ENCODE measurements at regions of chr22 and their contacts with region 1.

Region 1: DNA sequence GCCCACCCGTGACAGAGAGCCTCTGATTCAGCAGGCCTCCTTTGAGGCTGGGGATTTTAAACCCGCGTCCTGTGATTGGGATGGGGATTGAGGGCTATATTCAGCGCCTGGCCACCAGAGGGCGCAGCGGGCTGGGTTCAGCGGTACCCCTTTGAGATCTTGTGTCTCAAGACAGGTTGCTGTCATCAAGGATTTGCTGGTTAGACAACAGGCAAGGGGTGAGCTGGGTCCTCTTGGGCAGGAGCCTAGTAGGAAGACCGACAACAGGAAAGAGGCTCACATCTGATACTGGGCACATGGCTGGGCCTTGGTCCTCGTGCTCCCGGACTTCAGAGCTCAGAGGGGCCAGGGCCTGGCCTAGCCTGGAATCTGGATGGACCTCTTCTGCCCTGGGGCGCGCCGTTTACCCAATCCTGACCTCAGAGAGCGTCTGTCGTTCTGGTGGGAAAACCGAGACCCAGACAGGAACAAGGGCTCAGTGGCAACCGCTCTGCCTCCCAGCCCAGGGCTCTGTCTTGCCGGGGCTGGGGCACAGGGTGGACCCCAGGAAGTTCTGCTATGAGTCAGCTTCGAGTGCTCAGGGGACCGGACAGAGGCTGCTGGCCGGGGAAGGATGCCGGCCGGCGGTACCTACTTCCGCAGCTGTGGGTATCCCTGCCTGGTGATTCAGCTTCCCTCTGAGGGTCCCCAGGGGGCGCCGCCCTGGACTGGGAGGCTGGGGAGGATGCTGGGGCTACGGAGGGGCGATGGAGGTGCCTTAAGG is 929 bp upstream of the SLC35E4 start:
- DNase-seq: peak; percentile 81 to 90 (median 85)
- H3K4me3 ChIP-seq: peak overlapping the region; percentile 72
- H3K4me3 Mint-ChIP-seq: peak overlapping the region; percentile 79 to 96 (median 84)
- H3K27ac ChIP-seq: peak overlapping the region; percentile 69
- H3K27ac Mint-ChIP-seq: peak overlapping the region; percentile 90 to 98 (median 94)
- H3K4me1 ChIP-seq: peaks cover 35% of the 10 kb centered on the region
- H3K4me1 Mint-ChIP-seq: peaks cover 18 to 30% (median 21%) of the 10 kb centered on the region in 3 donors
- H3K27me3 ChIP-seq: no peaks in the 10 kb centered on the region
- H3K27me3 Mint-ChIP-seq: no peaks in the 10 kb centered on the region

Region 2: GRCh38 chr22:30444632-30445437 is 189.8 kb before region 1 on chr22:
- CTCF ChIA-PET with region 1: no interaction called
- POLR2A ChIA-PET with region 1: no interaction called
- DNase-seq: peak in 3 of 5 donors; percentile 24 to 59 (median 39)
- H3K4me3 ChIP-seq: no peak overlapping the region
- H3K4me3 Mint-ChIP-seq: peak overlapping the region in 1 of 7 donors; percentile 39
- H3K27ac ChIP-seq: no peak overlapping the region
- H3K27ac Mint-ChIP-seq: peak overlapping the region in 4 of 8 donors; percentile 26 to 55 (median 42)
- H3K4me1 ChIP-seq: peaks cover 11% of the 10 kb centered on the region
- H3K4me1 Mint-ChIP-seq: peaks cover 14 to 30% (median 20%) of the 10 kb centered on the region in 3 donors
- H3K27me3 ChIP-seq: no peaks in the 10 kb centered on the region
- H3K27me3 Mint-ChIP-seq: peaks cover 49 to 83% of the 10 kb centered on the region in 2 donors

Region 3: DNA sequence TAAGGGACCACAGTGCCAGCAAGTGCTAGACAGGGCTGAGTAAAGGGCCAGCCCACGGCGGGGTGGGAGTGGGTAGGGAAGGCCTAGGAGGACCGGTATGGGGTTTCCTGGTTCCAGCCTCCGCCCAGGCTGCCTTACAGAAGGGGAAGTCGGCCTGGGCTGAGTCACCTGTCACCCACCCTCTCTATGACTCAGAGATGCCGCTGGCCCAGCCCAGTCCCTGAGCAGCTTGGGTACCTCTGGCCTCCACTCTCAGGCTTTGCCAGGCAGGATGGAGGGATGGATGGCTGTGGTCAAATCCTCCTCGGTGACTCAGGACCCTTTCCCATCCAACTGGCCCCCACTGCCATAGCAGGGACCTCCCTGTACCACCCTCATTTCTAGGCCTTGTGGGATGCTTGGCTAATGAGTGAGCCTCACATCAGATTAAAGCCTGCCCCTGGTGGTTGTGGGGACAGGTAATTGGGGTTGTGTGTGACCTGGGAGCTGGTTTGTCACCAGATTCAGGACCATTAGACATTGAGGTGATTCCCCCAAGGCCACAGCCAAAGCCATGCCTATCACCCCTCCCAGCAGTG is 14.9 kb after region 1 on chr22:
- CTCF ChIA-PET with region 1: interaction called, 35 read pairs
- POLR2A ChIA-PET with region 1: no interaction called
- DNase-seq: peak in 4 of 5 donors; percentile 14 to 83 (median 34)
- H3K4me3 ChIP-seq: no peak overlapping the region
- H3K4me3 Mint-ChIP-seq: no peak overlapping the region
- H3K27ac ChIP-seq: peak overlapping the region; percentile 18
- H3K27ac Mint-ChIP-seq: peak overlapping the region; percentile 21 to 92 (median 70)
- H3K4me1 ChIP-seq: no peaks in the 10 kb centered on the region
- H3K4me1 Mint-ChIP-seq: peaks cover 4 to 22% (median 10%) of the 10 kb centered on the region in 3 donors
- H3K27me3 ChIP-seq: no peaks in the 10 kb centered on the region
- H3K27me3 Mint-ChIP-seq: no peaks in the 10 kb centered on the region

Region 4: DNA sequence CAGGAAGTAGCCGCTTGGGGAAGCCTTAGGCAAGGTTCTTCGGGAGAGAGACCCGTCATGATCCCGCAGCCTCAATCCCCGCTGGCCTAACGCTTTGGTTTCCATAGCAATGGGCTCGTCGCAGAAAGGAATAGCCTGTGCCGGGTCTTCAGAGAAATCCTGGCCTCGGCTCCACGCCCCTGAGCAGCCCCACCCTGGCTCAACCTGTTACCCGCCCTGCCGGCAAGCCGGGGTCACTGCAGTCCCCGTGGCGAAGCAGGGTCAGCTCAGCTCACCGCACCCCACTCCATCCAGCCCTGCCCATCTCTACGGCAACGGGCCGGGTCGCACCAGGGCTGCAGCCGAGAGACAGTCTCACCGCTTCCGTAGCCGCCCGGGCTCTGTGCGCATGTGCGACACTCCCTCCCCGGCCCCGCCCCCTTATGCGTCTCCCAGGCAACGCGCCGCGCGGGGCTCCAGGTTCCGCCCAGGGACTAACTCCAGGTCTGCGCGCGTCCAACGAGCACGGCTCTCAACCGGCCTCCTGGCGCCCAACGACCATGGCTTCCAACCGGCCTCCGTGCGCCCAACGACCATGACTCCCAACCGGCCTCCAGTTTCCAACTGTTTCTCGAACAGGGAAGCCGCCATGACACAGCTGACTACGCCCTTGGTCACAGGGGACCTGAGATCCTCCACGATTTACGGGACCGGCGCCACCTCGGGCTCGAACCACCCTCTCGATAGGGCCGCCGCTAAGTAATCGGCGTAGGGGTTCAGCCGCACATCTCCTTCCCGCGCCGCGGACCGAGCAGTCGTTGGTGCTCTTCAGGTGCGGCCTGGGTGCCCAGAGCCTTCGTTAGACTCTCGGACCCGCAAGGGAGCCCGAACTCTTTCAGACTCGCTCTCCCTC is 33.1 kb after region 1 on chr22 and contains the start of gene DUSP18:
- CTCF ChIA-PET with region 1: interaction called, 14 read pairs
- POLR2A ChIA-PET with region 1: interaction called, 4 read pairs
- DNase-seq: peak; percentile 90 to 96 (median 93)
- H3K4me3 ChIP-seq: peak within 1 kb of the TSS; percentile 96
- H3K4me3 Mint-ChIP-seq: peak within 1 kb of the TSS; percentile 89 to 98 (median 95)
- H3K27ac ChIP-seq: peak within 1 kb of the TSS; percentile 84
- H3K27ac Mint-ChIP-seq: peak within 1 kb of the TSS; percentile 88 to 97 (median 94)
- H3K4me1 ChIP-seq: peaks cover 20% of the 10 kb centered on the region
- H3K4me1 Mint-ChIP-seq: peaks cover 23 to 42% (median 38%) of the 10 kb centered on the region in 3 donors
- H3K27me3 ChIP-seq: no peaks in the 10 kb centered on the region
- H3K27me3 Mint-ChIP-seq: no peaks in the 10 kb centered on the region
- total RNA-seq, gene DUSP18: 11.4 to 12.5 TPM

Region 5: DNA sequence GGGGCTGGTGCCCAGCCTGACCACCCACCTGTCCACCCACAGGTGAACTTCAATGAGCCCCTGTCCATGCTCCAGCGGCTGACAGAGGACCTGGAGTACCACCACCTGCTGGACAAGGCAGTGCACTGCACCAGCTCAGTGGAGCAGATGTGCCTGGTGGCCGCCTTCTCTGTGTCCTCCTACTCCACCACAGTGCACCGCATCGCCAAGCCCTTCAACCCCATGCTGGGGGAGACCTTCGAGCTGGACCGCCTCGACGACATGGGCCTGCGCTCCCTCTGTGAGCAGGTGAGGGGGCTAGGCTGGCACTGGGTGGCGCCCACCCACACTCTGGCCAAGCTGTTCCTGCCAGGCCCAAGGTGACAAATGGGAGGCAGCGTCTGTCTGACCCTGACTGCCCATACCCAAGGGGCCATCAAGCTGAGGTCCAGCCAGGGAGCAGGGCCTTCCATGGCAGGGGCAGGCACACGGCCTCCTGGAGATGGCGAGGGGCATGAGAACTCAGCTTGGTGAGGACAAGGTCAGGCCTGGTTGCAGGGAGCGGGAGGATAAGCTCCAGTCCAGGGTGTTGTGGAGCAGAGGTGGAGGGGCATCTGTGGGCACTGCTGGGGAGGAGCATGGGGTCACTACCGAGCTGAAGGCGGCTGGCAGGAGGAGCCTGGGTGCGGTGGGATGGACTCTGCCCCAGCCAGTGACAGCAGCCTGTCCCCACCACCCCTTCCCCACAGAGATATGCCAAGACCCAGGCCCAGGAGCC is 256.2 kb after region 1 on chr22:
- CTCF ChIA-PET with region 1: interaction called, 15 read pairs
- POLR2A ChIA-PET with region 1: no interaction called
- DNase-seq: no peak
- H3K4me3 ChIP-seq: no peak overlapping the region
- H3K4me3 Mint-ChIP-seq: no peak overlapping the region
- H3K27ac ChIP-seq: no peak overlapping the region
- H3K27ac Mint-ChIP-seq: no peak overlapping the region
- H3K4me1 ChIP-seq: peaks cover 17% of the 10 kb centered on the region
- H3K4me1 Mint-ChIP-seq: peaks cover 15 to 26% (median 21%) of the 10 kb centered on the region in 3 donors
- H3K27me3 ChIP-seq: no peaks in the 10 kb centered on the region
- H3K27me3 Mint-ChIP-seq: peaks cover 0 to 2% of the 10 kb centered on the region in 2 donors

Region 6: GRCh38 chr22:30920407-30920806 is 285.8 kb after region 1 on chr22:
- CTCF ChIA-PET with region 1: interaction called, 42 read pairs
- POLR2A ChIA-PET with region 1: interaction called, 6 read pairs
- DNase-seq: peak; percentile 66 to 87 (median 74)
- H3K4me3 ChIP-seq: peak overlapping the region; percentile 44
- H3K4me3 Mint-ChIP-seq: peak overlapping the region; percentile 12 to 76 (median 64)
- H3K27ac ChIP-seq: no peak overlapping the region
- H3K27ac Mint-ChIP-seq: peak overlapping the region in 7 of 8 donors; percentile 0 to 52 (median 10)
- H3K4me1 ChIP-seq: peaks cover 22% of the 10 kb centered on the region
- H3K4me1 Mint-ChIP-seq: peaks cover 12 to 31% (median 14%) of the 10 kb centered on the region in 3 donors
- H3K27me3 ChIP-seq: no peaks in the 10 kb centered on the region
- H3K27me3 Mint-ChIP-seq: no peaks in the 10 kb centered on the region